ENCODE measurements at regions of chr4 and their contacts with region 1.

Region 1: GRCh38 chr4:130808492-130808891 is 1712.5 kb downstream of the C4orf33 start:
- DNase-seq: no peak
- ATAC-seq: peak; percentile 74
- H3K4me3 ChIP-seq: no peak overlapping the region
- H3K27ac ChIP-seq: no peak overlapping the region
- H3K4me1 ChIP-seq: no peaks in the 10 kb centered on the region
- H3K27me3 ChIP-seq: no peaks in the 10 kb centered on the region
- CTCF ChIP-seq: peak; percentile 31 to 42 (median 42); a peak in 5 of 6 replicates
- EP300 ChIP-seq: no peak
- POLR2A ChIP-seq: no peak
- RAD21 ChIP-seq: peak; percentile 38; the same call in 1 of the 2 replicates

Region 2: DNA sequence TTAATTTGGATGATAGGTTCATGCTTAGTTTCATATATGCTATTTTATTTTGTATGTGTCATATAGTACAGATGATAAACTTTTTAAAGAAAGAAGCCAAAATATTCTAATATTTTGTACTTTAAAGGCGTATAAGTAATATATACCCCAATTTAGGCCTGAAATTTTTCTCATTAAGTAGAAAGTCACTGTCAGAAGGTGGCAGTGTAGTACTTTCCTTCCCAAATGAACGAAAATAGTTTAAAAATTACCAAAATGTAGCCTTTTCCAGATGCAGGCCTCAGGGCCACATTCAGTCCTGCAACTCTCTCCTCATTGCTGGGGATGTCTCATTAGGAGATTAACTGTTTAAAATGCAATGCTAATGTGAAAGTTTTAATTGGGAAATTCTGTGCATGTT is 448.9 kb before region 1 on chr4:
- CTCF ChIA-PET with region 1: interaction called, 6 read pairs
- POLR2A ChIA-PET with region 1: no interaction called
- RAD21 ChIA-PET with region 1: no interaction called
- SMC1A ChIA-PET with region 1: no interaction called
- in situ Hi-C with region 1: no loop called
- intact Hi-C with region 1: loop called (anchors 10 kb)
- DNase-seq: no peak
- ATAC-seq: no peak
- H3K4me3 ChIP-seq: no peak overlapping the region
- H3K27ac ChIP-seq: no peak overlapping the region
- H3K4me1 ChIP-seq: no peaks in the 10 kb centered on the region
- H3K27me3 ChIP-seq: no peaks in the 10 kb centered on the region
- CTCF ChIP-seq: peak in 1 of 3 experiments; percentile 26; a peak in 1 of 6 replicates
- EP300 ChIP-seq: no peak
- POLR2A ChIP-seq: no peak
- RAD21 ChIP-seq: 0 out of 2 replicates have a peak, but pooled peaks have one; percentile 35

Region 3: GRCh38 chr4:130563185-130563888 is 245.2 kb before region 1 on chr4:
- CTCF ChIA-PET with region 1: interaction called, 29 read pairs
- POLR2A ChIA-PET with region 1: no interaction called
- RAD21 ChIA-PET with region 1: interaction called, 14 read pairs
- SMC1A ChIA-PET with region 1: interaction called, 18 read pairs
- in situ Hi-C with region 1: no loop called
- intact Hi-C with region 1: no loop called
- DNase-seq: no peak
- ATAC-seq: peak; percentile 55
- H3K4me3 ChIP-seq: no peak overlapping the region
- H3K27ac ChIP-seq: no peak overlapping the region
- H3K4me1 ChIP-seq: no peaks in the 10 kb centered on the region
- H3K27me3 ChIP-seq: no peaks in the 10 kb centered on the region
- CTCF ChIP-seq: peak in 2 of 3 experiments; percentile 22 to 23; a peak in 2 of 6 replicates
- EP300 ChIP-seq: no peak
- POLR2A ChIP-seq: no peak
- RAD21 ChIP-seq: 0 out of 2 replicates have a peak, but pooled peaks have one; percentile 13

Region 4: GRCh38 chr4:131411393-131411792 is 602.9 kb after region 1 on chr4:
- CTCF ChIA-PET with region 1: no interaction called
- POLR2A ChIA-PET with region 1: no interaction called
- RAD21 ChIA-PET with region 1: no interaction called
- SMC1A ChIA-PET with region 1: no interaction called
- in situ Hi-C with region 1: no loop called
- intact Hi-C with region 1: no loop called
- DNase-seq: no peak
- ATAC-seq: no peak
- H3K4me3 ChIP-seq: no peak overlapping the region
- H3K27ac ChIP-seq: no peak overlapping the region
- H3K4me1 ChIP-seq: no peaks in the 10 kb centered on the region
- H3K27me3 ChIP-seq: no peaks in the 10 kb centered on the region
- CTCF ChIP-seq: no peak
- EP300 ChIP-seq: no peak
- POLR2A ChIP-seq: no peak
- RAD21 ChIP-seq: no peak

Measured in GM12878 (cell line).